OCI-LY7 (cell line): ENCODE measurements at regions of chr16 and their contacts with region 1.

Region 1: GRCh38 chr16:11328172-11329070 is 16.8 kb upstream of the RMI2 start:
- DNase-seq: peak; percentile 98
- H3K4me3 ChIP-seq: peak overlapping the region; percentile 62
- H3K27ac ChIP-seq: peak overlapping the region; percentile 93
- H3K4me1 ChIP-seq: peaks cover 76% of the 10 kb centered on the region
- CTCF ChIP-seq: peak; percentile 51

Region 2: DNA sequence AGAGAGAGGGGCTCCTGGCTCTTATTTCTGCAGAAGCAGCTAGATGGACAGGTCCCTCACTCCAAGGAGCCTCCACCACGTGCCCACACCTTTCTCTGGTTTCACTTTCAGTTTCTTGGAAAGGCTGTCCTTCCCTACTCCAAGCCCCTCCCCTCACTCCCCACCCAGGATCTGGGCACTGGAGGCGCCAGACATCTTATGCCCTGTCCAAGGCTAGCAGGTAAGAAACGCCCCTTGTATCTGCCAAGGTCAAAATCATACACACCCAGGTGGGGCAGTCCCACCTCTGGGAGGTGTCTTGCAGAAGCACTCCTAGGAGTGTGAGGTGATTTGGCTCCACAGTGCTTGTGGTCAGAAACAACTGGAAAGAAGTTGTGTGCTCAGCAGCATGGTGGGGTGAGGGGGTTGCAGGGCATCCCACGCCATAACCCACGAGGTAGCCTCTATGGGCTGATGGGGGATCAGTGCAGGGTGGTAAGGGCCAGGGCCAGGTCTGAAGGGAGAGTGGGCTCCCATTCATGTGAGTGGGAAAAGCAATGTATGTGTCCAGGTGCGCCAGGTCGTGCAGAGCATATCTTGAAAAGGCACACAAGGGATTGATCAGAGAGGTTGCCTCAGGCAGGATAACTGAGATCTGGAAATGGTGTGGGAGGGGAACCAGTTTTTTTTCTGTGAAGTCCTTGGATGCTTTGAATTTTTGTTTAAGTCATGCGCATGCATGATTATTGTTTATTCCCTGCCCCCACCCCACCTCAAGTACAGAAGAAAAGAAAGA is 15.5 kb before region 1 on chr16:
- CTCF ChIA-PET with region 1: no interaction called
- POLR2A ChIA-PET with region 1: interaction called, 8 read pairs
- intact Hi-C with region 1: loop called (anchors 1 kb)
- DNase-seq: no peak
- H3K4me3 ChIP-seq: no peak overlapping the region
- H3K27ac ChIP-seq: peak overlapping the region; percentile 99
- H3K4me1 ChIP-seq: peaks cover 79% of the 10 kb centered on the region
- CTCF ChIP-seq: no peak

Region 3: GRCh38 chr16:11396241-11397048 is 68.0 kb after region 1 on chr16:
- CTCF ChIA-PET with region 1: no interaction called
- POLR2A ChIA-PET with region 1: no interaction called
- intact Hi-C with region 1: no loop called
- DNase-seq: peak; percentile 66
- H3K4me3 ChIP-seq: no peak overlapping the region
- H3K27ac ChIP-seq: no peak overlapping the region
- H3K4me1 ChIP-seq: no peaks in the 10 kb centered on the region
- CTCF ChIP-seq: peak; percentile 98